CD8-positive, alpha-beta memory T cell (primary cell): ENCODE measurements at regions of chr6 and their contacts with region 1.

Region 1: DNA sequence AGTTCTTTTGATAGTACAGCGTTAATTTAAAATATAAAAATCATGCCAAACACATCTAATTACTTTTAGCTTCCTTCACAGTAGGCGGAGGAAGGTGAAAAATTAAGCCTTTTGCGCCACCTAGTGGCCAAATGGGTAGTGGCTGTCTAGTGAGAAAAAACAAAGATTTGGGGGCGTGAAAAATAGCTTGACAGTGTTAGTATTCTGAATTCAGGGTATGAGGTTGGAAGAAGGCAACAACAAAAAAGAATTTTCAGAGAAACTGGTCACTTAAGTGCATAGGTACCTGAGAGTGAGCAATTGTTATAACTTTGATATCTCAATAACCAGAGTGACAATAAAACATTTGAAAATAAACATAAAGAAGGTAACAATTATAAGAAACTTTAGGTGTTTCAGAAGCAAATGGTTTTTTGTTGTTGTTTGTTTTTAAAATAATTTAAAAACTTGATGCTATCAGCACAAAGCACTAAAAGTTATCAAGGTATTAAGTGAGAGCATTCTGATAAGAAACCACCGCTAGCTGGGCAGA is 14.3 kb downstream of the PSMB9 start:
- DNase-seq: peak; percentile 76 to 89 (median 82)
- H3K4me3 ChIP-seq: no peak overlapping the region
- H3K4me3 Mint-ChIP-seq: no peak overlapping the region
- H3K27ac ChIP-seq: no peak overlapping the region
- H3K27ac Mint-ChIP-seq: peak overlapping the region in 1 of 8 donors; percentile 40
- H3K4me1 ChIP-seq: peaks cover 23% of the 10 kb centered on the region
- H3K4me1 Mint-ChIP-seq: peaks cover 24 to 35% (median 31%) of the 10 kb centered on the region in 3 donors
- H3K27me3 ChIP-seq: no peaks in the 10 kb centered on the region
- H3K27me3 Mint-ChIP-seq: peaks cover 4% of the 10 kb centered on the region in 2 donors

Region 2: GRCh38 chr6:32413427-32414047 is 454.8 kb before region 1 on chr6:
- CTCF ChIA-PET with region 1: interaction called, 13 read pairs
- POLR2A ChIA-PET with region 1: no interaction called
- DNase-seq: peak; percentile 72 to 87 (median 77)
- H3K4me3 ChIP-seq: no peak overlapping the region
- H3K4me3 Mint-ChIP-seq: no peak overlapping the region
- H3K27ac ChIP-seq: no peak overlapping the region
- H3K27ac Mint-ChIP-seq: no peak overlapping the region
- H3K4me1 ChIP-seq: no peaks in the 10 kb centered on the region
- H3K4me1 Mint-ChIP-seq: peaks cover 9 to 13% (median 11%) of the 10 kb centered on the region in 3 donors
- H3K27me3 ChIP-seq: peaks cover 20% of the 10 kb centered on the region
- H3K27me3 Mint-ChIP-seq: peaks cover 30 to 57% of the 10 kb centered on the region in 2 donors

Region 3: DNA sequence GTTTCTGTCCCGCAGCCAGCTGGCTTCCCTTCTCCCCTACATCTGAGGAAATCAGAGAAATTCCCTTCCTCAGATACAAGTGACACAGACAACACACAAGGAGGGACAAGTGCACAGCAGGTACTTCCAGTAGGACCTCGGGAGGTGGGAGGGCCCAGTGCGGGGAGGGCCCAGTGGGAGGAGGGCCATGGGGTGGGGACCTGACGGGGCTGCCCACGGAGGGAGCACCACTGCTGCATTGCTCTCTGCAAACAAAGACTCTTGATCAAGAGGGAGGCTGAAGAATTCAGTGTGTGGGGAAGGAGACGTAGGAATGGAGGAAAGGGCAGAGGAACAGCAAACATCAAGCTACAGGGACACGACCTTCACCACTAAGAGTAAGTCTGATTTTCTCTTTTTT is 38.8 kb before region 1 on chr6:
- CTCF ChIA-PET with region 1: interaction called, 16 read pairs
- POLR2A ChIA-PET with region 1: no interaction called
- DNase-seq: no peak
- H3K4me3 ChIP-seq: no peak overlapping the region
- H3K4me3 Mint-ChIP-seq: no peak overlapping the region
- H3K27ac ChIP-seq: no peak overlapping the region
- H3K27ac Mint-ChIP-seq: peak overlapping the region in 2 of 8 donors; percentile 4 to 23
- H3K4me1 ChIP-seq: no peaks in the 10 kb centered on the region
- H3K4me1 Mint-ChIP-seq: peaks cover 23 to 38% (median 27%) of the 10 kb centered on the region in 3 donors
- H3K27me3 ChIP-seq: no peaks in the 10 kb centered on the region
- H3K27me3 Mint-ChIP-seq: no peaks in the 10 kb centered on the region

Region 4: DNA sequence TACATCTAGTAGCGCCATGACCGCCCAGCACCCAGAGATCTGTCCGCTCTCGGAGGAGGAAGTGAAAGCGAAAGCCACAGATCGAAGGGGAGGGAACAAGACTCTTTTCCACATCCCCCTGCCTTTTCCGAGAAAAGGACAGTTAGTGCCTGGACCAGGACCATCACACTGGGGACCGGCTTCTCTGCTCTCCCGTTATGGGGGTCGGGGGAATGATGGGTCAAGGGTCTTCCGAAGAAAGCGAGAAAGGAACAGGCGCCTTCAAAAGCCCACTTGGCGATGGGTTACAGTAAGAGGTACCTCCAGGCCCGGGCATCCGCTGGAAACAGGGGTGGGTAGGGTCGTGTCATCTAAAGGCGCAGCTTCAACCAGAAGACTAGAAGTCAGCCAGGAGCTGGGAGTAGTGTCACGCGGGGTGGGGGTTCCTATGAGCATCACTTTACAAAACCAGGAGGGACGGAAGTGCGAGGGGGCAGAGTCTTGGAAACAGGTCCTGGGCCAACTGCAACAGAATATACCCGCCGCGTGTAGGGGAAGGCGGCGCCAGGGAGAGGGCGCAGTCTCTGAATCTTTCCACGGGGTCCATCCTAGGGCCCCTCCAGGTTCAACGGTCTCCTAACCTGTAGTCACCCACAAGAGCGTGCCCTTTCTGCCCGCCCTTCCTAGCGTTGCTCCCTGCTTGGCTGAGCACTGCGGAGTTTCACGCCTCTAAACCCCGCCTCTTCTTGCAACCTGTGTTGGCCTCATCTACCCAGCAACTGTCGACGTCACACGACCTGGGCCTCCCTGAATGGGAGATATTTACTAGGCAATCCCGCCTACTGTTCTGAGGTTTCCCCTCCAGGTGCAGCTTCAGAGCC is 24.1 kb before region 1 on chr6 and contains the start of gene PSMB8:
- CTCF ChIA-PET with region 1: interaction called, 190 read pairs
- POLR2A ChIA-PET with region 1: interaction called, 56 read pairs
- DNase-seq: peak; percentile 93 to 99 (median 97)
- H3K4me3 ChIP-seq: peak within 1 kb of the TSS; percentile 99
- H3K4me3 Mint-ChIP-seq: peak within 1 kb of the TSS; percentile 94 to 99 (median 97)
- H3K27ac ChIP-seq: peak within 1 kb of the TSS; percentile 99
- H3K27ac Mint-ChIP-seq: peak within 1 kb of the TSS; percentile 96 to 100 (median 100)
- H3K4me1 ChIP-seq: peaks cover 78% of the 10 kb centered on the region
- H3K4me1 Mint-ChIP-seq: peaks cover 76 to 83% (median 82%) of the 10 kb centered on the region in 3 donors
- H3K27me3 ChIP-seq: no peaks in the 10 kb centered on the region
- H3K27me3 Mint-ChIP-seq: peaks cover 0 to 3% of the 10 kb centered on the region in 2 donors
- total RNA-seq, gene PSMB8: 311 to 326 TPM

Region 5: DNA sequence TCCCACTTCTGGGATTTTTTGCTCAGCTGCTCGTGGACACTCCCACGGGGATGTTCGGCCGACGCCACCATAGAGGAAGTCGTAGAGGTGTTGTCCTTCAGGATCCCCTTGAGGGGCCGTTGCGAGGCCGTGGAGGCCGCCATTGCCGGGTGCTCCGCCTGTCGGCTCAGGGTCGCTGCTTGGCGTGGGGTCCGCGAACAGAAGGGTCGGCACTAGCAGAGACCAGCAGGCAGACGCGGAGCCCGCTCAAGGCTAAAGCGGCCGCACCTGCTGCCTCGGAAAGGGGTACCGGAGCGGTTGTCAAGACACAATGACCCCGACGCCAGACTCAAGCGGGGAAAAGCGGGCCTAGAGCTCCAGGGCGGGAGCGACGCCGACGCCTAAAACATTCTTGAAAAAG is 11.4 kb after region 1 on chr6:
- CTCF ChIA-PET with region 1: interaction called, 14 read pairs
- POLR2A ChIA-PET with region 1: no interaction called
- DNase-seq: no peak
- H3K4me3 ChIP-seq: no peak overlapping the region
- H3K4me3 Mint-ChIP-seq: no peak overlapping the region
- H3K27ac ChIP-seq: no peak overlapping the region
- H3K27ac Mint-ChIP-seq: peak overlapping the region in 1 of 8 donors; percentile 74
- H3K4me1 ChIP-seq: no peaks in the 10 kb centered on the region
- H3K4me1 Mint-ChIP-seq: no peaks in the 10 kb centered on the region
- H3K27me3 ChIP-seq: no peaks in the 10 kb centered on the region
- H3K27me3 Mint-ChIP-seq: peaks cover 0 to 8% of the 10 kb centered on the region in 2 donors

Region 6: DNA sequence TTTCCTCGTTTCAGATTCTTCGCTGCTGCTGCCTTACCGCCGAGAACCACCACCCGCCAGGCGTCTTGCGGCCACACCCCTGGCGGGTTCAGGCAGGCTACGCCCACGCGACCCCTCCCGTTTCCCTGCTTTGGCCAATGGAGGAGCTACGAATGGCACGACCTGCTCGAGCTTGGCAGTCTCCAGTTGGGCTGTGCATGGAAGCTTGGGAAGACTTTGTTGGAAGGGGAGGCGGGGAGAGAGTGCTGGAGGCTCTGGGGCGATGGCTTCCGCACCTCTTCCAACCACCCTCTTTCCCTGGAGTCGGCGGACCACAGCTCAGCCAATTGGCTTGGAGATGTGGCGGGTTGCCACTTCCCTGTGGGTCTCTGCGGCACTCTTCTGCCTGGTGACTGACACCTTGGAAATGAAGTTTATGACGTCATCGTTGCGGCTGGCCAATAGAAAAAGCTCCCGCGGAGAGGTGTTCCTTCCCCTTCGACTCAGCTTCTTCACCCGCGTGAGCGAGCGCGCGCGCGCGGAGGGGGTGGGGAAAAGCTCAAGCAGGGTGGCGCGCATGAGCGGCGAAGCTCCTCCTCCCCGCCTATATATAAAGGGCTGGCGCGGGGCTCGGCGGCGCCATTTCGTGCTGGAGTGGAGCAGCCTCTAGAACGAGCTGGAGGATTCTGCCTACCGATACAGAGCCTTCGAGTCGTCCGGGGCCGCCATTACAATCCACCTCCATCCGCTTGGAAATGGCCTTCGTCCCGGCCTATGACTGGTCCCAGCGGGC is 103.4 kb after region 1 on chr6:
- CTCF ChIA-PET with region 1: interaction called, 12 read pairs
- POLR2A ChIA-PET with region 1: interaction called, 5 read pairs
- DNase-seq: peak; percentile 99 to 100 (median 100)
- H3K4me3 ChIP-seq: peak overlapping the region; percentile 96
- H3K4me3 Mint-ChIP-seq: peak overlapping the region; percentile 96 to 100 (median 97)
- H3K27ac ChIP-seq: peak overlapping the region; percentile 97
- H3K27ac Mint-ChIP-seq: peak overlapping the region; percentile 96 to 100 (median 99)
- H3K4me1 ChIP-seq: peaks cover 33% of the 10 kb centered on the region
- H3K4me1 Mint-ChIP-seq: peaks cover 37 to 50% (median 41%) of the 10 kb centered on the region in 3 donors
- H3K27me3 ChIP-seq: no peaks in the 10 kb centered on the region
- H3K27me3 Mint-ChIP-seq: peaks cover 0 to 19% of the 10 kb centered on the region in 2 donors